ENCODE measurements at regions of chr19 and their contacts with region 1.

Region 1: DNA sequence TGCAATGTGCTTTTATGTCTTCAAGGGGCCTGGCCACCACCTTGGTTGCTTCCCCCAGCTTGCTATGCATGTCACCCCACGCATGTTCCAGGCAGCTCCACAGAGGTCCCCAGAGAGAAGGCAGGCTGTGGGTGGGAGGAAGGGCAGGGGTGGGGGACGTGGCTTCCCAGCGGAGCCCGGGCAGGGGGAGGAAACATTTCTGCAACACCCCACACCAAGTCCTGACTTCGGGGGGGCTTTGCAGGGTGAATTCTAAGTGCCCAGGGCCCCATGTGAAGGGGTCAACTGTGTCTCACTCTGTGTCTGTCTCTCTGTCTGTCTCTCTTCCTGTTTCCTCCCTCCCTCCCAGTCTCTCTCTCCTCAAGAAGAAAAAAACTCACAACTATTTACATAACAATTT is 39.6 kb downstream of the LTBP4 start:
- DNase-seq: no peak
- H3K4me3 Mint-ChIP-seq: no peak overlapping the region
- H3K27ac Mint-ChIP-seq: no peak overlapping the region
- H3K4me1 Mint-ChIP-seq: peaks cover 13% of the 10 kb centered on the region
- H3K27me3 Mint-ChIP-seq: no peaks in the 10 kb centered on the region

Region 2: GRCh38 chr19:40529093-40529954 is 111.4 kb before region 1 on chr19:
- CTCF ChIA-PET with region 1: interaction called, 26 read pairs
- intact Hi-C with region 1: loop called (anchors 2 kb)
- DNase-seq: peak; percentile 92
- H3K4me3 Mint-ChIP-seq: peak overlapping the region; percentile 43
- H3K27ac Mint-ChIP-seq: no peak overlapping the region
- H3K4me1 Mint-ChIP-seq: peaks cover 10% of the 10 kb centered on the region
- H3K27me3 Mint-ChIP-seq: peaks cover 13% of the 10 kb centered on the region

Region 3: GRCh38 chr19:40542202-40542859 is 98.4 kb before region 1 on chr19:
- CTCF ChIA-PET with region 1: interaction called, 21 read pairs
- intact Hi-C with region 1: no loop called
- DNase-seq: no peak
- H3K4me3 Mint-ChIP-seq: no peak overlapping the region
- H3K27ac Mint-ChIP-seq: no peak overlapping the region
- H3K4me1 Mint-ChIP-seq: no peaks in the 10 kb centered on the region
- H3K27me3 Mint-ChIP-seq: peaks cover 6% of the 10 kb centered on the region

Region 4: GRCh38 chr19:40549007-40549708 is 91.6 kb before region 1 on chr19:
- CTCF ChIA-PET with region 1: interaction called, 21 read pairs
- intact Hi-C with region 1: no loop called
- DNase-seq: peak; percentile 80
- H3K4me3 Mint-ChIP-seq: peak overlapping the region; percentile 0
- H3K27ac Mint-ChIP-seq: no peak overlapping the region
- H3K4me1 Mint-ChIP-seq: peaks cover 10% of the 10 kb centered on the region
- H3K27me3 Mint-ChIP-seq: peaks cover 41% of the 10 kb centered on the region

Region 5: DNA sequence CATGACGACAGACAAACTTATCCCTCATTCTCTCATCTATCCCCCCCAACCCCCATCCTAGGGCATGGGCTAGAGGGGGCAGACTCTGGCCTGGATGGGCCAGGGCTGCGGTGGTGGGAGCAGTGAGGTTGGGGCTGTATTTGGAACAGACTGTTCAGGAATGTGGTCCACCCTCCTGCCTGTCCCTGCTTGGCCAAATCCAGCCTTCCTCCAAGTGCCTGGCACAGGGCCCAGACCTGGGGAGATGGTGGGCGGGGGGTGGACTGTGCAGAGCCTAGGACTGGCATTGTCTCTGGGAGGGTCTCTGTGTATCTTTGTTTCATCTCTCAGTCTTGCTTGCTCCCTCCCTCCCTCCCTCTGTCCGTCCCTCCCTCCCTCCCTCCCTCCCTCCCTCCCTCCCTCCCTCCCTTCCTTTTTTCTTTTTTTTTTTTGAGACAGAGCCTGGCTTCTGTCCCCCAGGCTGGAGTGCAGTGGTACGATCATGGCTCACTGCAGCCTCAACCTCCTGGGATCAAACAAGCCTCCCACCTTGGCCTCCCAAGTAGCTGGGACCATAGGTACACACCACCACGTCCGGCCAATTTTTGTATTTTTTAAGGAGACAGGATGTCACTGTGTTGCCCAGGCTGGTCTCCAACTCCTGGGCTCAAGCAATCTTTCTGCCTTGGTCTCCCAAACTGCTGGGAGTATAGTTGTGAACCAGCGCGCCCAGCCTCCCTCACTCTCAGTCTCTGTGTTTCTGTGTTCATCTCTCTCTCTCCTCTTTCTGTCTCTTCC is 172.6 kb after region 1 on chr19:
- CTCF ChIA-PET with region 1: interaction called, 11 read pairs
- intact Hi-C with region 1: no loop called
- DNase-seq: no peak
- H3K4me3 Mint-ChIP-seq: no peak overlapping the region
- H3K27ac Mint-ChIP-seq: no peak overlapping the region
- H3K4me1 Mint-ChIP-seq: peaks cover 35% of the 10 kb centered on the region
- H3K27me3 Mint-ChIP-seq: no peaks in the 10 kb centered on the region

Measured in activated naive CD4-positive, alpha-beta T cell treated with anti-CD3 and anti-CD28 coated beads for 36 hours (primary cell).